Posterior vena cava (tissue), 2 donors: ENCODE measurements at regions of chr2 and their contacts with region 1.

Region 1: DNA sequence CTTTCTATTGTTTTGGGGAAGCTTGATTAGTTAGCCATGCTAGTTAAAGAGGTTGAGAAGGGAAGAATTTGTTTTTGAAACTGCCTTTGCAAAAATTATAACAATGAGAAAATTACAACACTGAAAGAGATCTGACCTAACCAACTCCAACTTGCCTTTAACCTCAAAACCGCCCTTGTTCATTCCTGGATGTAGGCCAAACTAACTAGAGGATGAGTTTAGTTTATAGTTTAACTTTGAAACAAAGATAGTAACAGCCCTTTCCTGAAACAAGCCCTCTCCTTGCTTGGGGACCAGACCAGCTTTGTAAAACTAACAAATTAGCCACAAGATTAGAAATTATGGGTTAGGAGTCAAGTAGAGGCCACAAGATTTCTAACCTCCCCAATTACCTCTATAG is 713.9 kb downstream of the CPS1 start:
- DNase-seq: no peak

Region 2: DNA sequence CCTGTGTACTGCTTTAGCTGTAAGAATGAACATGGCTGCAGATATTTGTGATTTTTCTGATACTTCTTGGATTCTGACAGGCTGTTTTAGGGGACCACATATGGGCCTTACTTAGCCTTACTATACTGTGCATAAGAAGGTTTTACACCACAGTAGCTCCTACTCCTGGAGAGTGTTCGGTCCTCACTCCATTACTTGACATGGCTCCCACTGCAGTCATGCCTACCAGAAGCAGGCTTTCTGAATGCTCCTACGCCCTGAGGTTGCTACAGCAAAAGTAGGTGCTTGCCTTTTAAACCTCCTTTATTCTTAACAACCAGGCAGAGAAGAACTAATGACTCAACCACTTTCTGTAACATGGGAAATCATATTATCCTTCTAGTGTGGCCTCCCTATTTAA is 1971.7 kb before region 1 on chr2:
- intact Hi-C with region 1: loop called in 1 of 2 experiments (anchors 10 kb)
- DNase-seq: no peak

Region 3: GRCh38 chr2:211216221-211216620 is 54.0 kb before region 1 on chr2:
- intact Hi-C with region 1: no loop called
- DNase-seq: no peak